Activated CD4-positive, alpha-beta T cell treated with anti-CD3 and anti-CD28 coated beads for 36 hours (primary cell): ENCODE measurements at regions of chr12 and their contacts with region 1.

Region 1: DNA sequence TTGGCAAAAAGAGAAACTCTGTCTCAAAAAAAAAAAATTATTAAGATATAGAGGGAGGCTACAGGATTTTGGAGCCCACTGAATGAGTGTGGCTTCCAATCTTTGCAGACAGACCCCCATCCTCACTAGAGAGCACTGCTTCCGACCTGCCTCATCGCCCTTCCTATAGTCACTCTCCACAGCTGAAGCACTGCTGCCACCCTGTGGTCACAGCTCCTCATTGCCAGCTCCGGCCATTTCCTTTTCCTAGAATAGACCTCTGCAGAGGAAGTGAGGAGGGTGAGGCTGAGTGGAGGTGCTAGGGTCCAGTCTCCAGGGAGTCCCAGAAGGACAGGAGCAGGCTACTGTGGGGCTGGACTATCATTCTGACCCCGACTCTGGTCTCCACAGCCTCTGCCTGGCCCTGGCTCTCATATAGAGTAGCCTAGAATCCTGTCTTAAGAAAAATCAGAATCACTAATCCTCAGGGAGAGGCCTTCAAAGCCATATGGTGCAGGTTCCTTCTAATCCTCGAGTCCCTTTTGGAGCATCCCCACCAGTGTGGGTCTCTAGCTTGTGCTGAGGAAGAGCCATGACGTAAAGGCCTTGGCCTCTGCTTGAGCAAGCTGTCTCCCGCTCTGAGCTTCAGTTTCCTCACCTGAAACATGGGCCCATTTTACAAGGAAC is 1.4 kb upstream of the NPFF start:
- DNase-seq: peak; percentile 92
- ATAC-seq: peak; percentile 99
- H3K4me3 Mint-ChIP-seq: no peak overlapping the region
- H3K27ac Mint-ChIP-seq: peak overlapping the region; percentile 47
- H3K4me1 Mint-ChIP-seq: peaks cover 7% of the 10 kb centered on the region
- H3K27me3 Mint-ChIP-seq: no peaks in the 10 kb centered on the region

Region 2: DNA sequence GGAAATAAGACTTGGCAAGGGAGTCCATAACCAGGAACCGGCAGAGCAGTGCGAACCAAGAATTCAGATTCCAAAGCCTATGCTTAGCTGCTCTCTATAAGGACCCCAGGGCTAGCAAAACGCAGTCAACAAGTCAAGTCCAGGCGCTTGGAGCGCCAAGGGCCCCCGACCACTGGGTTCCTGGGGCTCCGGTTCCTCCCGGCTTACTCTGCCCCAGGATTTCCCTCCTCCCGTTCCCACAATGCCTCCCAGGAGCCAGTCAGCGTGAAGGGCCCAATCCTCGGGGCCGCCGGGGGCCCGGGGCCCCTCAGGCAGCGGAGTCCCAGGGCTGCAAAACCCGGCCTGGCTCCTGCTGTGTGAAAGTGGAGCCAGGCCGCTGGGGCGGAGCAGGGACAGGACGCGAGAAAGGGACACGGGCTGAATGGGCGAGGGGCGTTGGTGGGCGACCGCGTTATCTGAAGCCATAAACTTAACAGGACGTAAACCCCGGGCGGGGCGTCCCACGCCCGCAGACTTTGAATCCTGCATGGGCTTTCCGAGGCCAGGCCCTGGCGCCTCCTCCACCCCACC is 605.3 kb before region 1 on chr12:
- CTCF ChIA-PET with region 1: no interaction called
- POLR2A ChIA-PET with region 1: no interaction called
- intact Hi-C with region 1: no loop called
- DNase-seq: peak; percentile 82
- ATAC-seq: peak; percentile 96
- H3K4me3 Mint-ChIP-seq: no peak overlapping the region
- H3K27ac Mint-ChIP-seq: no peak overlapping the region
- H3K4me1 Mint-ChIP-seq: peaks cover 3% of the 10 kb centered on the region
- H3K27me3 Mint-ChIP-seq: no peaks in the 10 kb centered on the region

Region 3: DNA sequence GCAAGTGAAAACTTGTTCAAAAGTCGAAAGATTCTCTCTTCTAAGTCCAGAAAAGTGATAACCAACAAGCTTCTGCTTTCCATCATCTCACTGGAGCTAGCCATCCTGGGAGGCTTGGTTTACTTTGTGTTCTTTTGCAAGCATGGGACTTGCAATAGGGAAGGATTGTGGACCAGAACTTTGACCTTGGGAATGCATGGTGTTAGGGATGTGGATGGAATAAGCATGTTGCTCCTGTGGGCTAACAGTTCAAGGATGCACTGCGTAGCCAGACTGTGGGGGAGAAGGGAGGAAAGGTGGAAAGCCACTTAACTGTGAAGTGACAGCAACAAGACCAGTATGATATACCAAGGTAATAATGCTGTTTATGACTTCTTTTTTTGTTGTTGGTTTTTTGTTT is 376.8 kb before region 1 on chr12:
- CTCF ChIA-PET with region 1: no interaction called
- POLR2A ChIA-PET with region 1: no interaction called
- intact Hi-C with region 1: no loop called
- DNase-seq: no peak
- ATAC-seq: no peak
- H3K4me3 Mint-ChIP-seq: no peak overlapping the region
- H3K27ac Mint-ChIP-seq: no peak overlapping the region
- H3K4me1 Mint-ChIP-seq: peaks cover 4% of the 10 kb centered on the region
- H3K27me3 Mint-ChIP-seq: peaks cover 8% of the 10 kb centered on the region

Region 4: GRCh38 chr12:53344824-53345485 is 163.7 kb before region 1 on chr12:
- CTCF ChIA-PET with region 1: interaction called, 14 read pairs
- POLR2A ChIA-PET with region 1: no interaction called
- intact Hi-C with region 1: no loop called
- DNase-seq: peak; percentile 88
- ATAC-seq: peak; percentile 85
- H3K4me3 Mint-ChIP-seq: peak overlapping the region; percentile 83
- H3K27ac Mint-ChIP-seq: peak overlapping the region; percentile 90
- H3K4me1 Mint-ChIP-seq: peaks cover 24% of the 10 kb centered on the region
- H3K27me3 Mint-ChIP-seq: peaks cover 2% of the 10 kb centered on the region